ENCODE measurements at regions of chr3 and their contacts with region 1.

Region 1: GRCh38 chr3:97481416-97481815 is 283.1 kb upstream of the ARL6 start:
- DNase-seq: no peak
- H3K4me3 ChIP-seq: no peak overlapping the region
- H3K27ac ChIP-seq: no peak overlapping the region
- H3K4me1 ChIP-seq: no peaks in the 10 kb centered on the region
- H3K27me3 ChIP-seq: no peaks in the 10 kb centered on the region
- CTCF ChIP-seq: no peak
- POLR2A ChIP-seq: no peak

Region 2: GRCh38 chr3:97350971-97351370 is 130.4 kb before region 1 on chr3:
- intact Hi-C with region 1: no loop called
- DNase-seq: no peak
- H3K4me3 ChIP-seq: no peak overlapping the region
- H3K27ac ChIP-seq: no peak overlapping the region
- H3K4me1 ChIP-seq: no peaks in the 10 kb centered on the region
- H3K27me3 ChIP-seq: no peaks in the 10 kb centered on the region
- CTCF ChIP-seq: no peak
- POLR2A ChIP-seq: no peak

Region 3: DNA sequence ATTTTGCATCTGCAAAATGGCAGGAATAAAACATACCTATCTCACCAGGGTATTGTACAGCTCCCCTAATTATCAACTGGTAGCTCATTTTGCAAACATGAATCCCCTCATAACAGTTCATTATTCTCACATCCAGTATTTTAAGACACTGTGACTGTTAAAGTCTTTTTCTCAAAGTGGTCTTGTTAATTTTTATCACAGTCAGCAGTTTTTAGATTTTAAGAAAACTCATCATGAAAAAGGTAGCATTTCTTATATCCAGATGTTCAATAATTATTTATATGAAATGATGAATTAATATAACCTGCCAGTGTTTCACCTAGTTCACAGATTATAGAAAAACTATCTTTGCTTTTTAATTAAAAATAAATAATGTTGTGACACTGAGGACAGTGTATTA is 71.8 kb before region 1 on chr3:
- intact Hi-C with region 1: loop called (anchors 2 kb)
- DNase-seq: no peak
- H3K4me3 ChIP-seq: no peak overlapping the region
- H3K27ac ChIP-seq: no peak overlapping the region
- H3K4me1 ChIP-seq: no peaks in the 10 kb centered on the region
- H3K27me3 ChIP-seq: no peaks in the 10 kb centered on the region
- CTCF ChIP-seq: no peak
- POLR2A ChIP-seq: no peak

Measured in vagina (tissue), 2 donors.